ENCODE measurements at regions of chr16 and their contacts with region 1.

Region 1: DNA sequence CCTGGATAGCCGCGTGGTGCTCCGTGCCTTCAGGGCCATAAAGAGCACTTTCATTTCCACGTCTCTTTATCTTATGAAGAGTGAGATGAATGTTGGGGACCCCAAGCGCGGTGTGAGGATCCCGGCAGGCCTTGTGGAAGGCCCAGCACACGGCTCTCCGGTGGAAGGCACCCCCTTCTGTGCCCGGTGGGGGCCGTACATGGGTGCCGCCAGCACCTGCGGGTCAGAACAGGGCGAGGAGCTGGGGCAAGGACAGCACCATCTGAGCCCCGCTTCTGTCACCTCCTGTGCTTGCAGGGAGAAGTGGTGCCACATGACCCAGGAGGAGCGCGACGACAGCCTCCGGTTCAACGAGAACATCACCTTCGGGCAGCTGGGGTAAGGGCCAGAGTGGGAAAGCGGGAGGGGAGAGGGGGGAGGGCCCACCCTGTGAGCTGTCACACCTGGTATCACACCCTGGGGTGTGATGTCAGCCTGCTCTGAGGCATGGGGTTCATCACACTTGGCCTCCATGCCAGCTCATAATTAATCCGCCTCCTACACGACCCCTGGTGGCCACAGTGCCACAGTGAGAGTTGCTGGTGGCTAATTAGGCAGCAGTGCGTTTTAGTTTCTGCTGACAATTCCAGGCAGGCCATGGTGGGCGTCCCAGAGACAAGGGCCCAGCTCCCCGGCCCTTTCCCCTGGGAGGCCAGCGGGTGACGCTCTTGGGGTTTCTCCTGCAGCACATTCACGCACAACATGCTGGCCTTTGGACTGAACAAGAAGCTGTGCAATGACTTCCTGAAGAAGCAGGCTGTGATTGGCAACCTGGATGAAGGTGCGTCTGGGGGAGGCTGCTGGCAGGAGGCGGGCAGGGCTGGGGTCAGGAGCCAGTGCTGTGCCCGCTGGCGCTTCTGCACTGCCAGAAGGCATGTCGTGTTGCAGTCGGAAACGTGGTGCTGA is 25.7 kb downstream of the CIBAR2 start:
- DNase-seq: peak; percentile 82
- H3K4me3 Mint-ChIP-seq: no peak overlapping the region
- H3K27ac Mint-ChIP-seq: no peak overlapping the region
- H3K4me1 Mint-ChIP-seq: peaks cover 9% of the 10 kb centered on the region
- H3K27me3 Mint-ChIP-seq: no peaks in the 10 kb centered on the region
- CTCF ChIP-seq: peak; percentile 89

Region 2: DNA sequence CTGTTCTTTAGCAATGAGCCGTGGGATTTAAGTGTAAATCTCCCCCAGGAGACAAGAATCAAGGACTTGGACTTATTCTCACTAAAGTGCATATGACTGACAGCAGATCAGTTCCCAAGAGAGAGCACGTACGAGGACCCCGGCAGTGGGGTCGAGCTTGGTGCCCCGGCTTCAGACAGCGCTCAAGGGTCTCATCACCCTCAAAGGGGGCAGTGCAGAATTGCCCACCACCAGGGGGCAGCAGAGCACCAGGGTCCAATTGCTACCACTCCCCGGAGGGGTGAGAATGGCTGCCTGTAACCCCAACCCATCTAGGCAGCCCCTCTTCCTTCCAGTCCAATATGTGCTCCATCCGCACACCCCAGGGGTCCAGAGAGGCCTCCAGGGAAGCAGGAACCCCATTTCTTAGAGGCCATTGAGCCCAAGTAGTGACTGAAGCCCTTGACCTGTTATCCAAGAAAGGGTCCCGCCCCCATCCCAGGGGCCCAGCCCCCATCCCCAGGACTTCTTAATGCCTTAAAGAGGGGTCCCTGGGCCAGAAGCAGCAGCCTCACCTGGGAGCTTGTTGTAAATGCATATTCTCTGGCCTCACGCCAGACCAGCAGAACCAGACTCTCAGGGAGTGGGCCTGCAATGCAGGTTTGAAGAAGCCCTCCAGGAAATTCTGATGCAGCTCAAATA is 161.4 kb before region 1 on chr16:
- CTCF ChIA-PET with region 1: interaction called, 7 read pairs
- intact Hi-C with region 1: loop called (anchors 1 kb)
- DNase-seq: peak; percentile 84
- H3K4me3 Mint-ChIP-seq: no peak overlapping the region
- H3K27ac Mint-ChIP-seq: no peak overlapping the region
- H3K4me1 Mint-ChIP-seq: no peaks in the 10 kb centered on the region
- H3K27me3 Mint-ChIP-seq: peaks cover 34% of the 10 kb centered on the region
- CTCF ChIP-seq: peak; percentile 98

Region 3: DNA sequence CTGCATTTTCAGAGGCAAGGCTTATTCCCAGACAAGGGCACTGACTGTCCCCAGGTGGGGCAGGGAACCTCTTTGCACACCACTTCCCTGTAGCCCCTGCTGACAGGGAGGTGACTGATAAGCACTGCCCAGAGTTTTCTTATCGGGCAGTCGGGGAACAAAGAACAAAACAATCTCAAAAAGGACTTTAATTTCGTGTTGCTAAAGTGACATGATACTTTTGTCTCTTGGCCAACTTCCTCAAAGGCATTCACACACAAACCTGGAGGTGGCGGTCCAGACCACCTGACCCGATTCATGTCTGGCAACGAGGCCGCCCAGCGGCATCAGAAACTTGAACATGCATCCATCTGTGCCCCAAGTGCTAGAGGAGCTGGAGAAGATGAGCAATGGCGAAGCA is 104.2 kb before region 1 on chr16:
- CTCF ChIA-PET with region 1: interaction called, 12 read pairs
- intact Hi-C with region 1: loop called (anchors 1 kb)
- DNase-seq: peak; percentile 61
- H3K4me3 Mint-ChIP-seq: peak overlapping the region; percentile 29
- H3K27ac Mint-ChIP-seq: peak overlapping the region; percentile 85
- H3K4me1 Mint-ChIP-seq: peaks cover 70% of the 10 kb centered on the region
- H3K27me3 Mint-ChIP-seq: no peaks in the 10 kb centered on the region
- CTCF ChIP-seq: no peak

Region 4: GRCh38 chr16:84992717-84993075 is 93.9 kb before region 1 on chr16:
- CTCF ChIA-PET with region 1: interaction called, 12 read pairs
- intact Hi-C with region 1: no loop called
- DNase-seq: no peak
- H3K4me3 Mint-ChIP-seq: peak overlapping the region; percentile 37
- H3K27ac Mint-ChIP-seq: peak overlapping the region; percentile 95
- H3K4me1 Mint-ChIP-seq: peaks cover 54% of the 10 kb centered on the region
- H3K27me3 Mint-ChIP-seq: no peaks in the 10 kb centered on the region
- CTCF ChIP-seq: no peak

Region 5: DNA sequence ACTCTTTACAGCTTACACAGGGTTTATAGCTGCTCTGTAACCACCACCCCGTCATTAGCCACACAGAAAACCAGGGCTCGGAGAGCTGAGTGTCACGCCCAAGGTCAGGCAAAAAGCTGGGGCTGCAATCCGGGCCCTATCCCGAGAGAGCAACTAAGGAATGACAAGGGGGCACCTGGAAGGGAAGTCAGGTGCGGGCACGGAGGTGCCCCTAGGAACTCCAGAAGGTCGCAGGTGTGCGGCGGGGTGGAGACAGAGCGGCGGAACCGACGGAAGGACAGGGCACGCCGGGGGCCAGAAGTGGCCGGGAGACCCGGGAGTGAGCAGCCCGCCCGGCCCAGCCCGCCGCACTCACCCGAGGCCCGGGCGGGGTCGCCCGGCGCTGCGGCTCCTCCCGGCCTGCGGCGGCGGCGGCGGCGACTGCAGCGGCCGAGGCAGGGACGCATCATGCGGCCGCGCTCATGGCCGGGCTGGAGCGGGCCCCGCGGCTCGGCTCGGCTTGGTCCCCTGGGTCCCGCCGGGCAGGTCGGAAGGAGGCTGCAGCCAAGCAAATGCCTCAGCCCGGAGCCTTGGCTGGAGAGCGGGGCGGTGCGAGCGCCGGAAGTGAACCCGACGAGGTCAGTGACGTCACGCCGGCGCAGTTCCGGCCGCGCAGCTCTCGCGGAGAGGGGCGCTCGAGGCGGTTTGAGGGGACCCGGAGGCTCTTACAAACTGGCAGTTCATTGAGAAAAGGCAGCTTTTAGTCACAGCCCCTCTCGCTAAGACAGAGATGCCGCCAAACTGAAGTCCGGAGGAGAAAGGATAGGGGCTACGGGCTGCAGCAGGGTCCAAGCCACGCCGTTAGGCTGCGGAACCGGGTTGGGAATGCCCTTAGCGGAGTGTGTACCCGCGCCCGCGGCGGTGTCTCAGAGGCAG is 75.4 kb before region 1 on chr16 and contains the start of gene ZDHHC7:
- CTCF ChIA-PET with region 1: interaction called, 3 read pairs
- intact Hi-C with region 1: loop called (anchors 5 kb)
- DNase-seq: peak; percentile 92
- H3K4me3 Mint-ChIP-seq: peak within 1 kb of the TSS; percentile 89
- H3K27ac Mint-ChIP-seq: peak within 1 kb of the TSS; percentile 89
- H3K4me1 Mint-ChIP-seq: peaks cover 36% of the 10 kb centered on the region
- H3K27me3 Mint-ChIP-seq: no peaks in the 10 kb centered on the region
- CTCF ChIP-seq: no peak
- total RNA-seq, gene ZDHHC7: 100 and 109 TPM in 2 replicates

Region 6: DNA sequence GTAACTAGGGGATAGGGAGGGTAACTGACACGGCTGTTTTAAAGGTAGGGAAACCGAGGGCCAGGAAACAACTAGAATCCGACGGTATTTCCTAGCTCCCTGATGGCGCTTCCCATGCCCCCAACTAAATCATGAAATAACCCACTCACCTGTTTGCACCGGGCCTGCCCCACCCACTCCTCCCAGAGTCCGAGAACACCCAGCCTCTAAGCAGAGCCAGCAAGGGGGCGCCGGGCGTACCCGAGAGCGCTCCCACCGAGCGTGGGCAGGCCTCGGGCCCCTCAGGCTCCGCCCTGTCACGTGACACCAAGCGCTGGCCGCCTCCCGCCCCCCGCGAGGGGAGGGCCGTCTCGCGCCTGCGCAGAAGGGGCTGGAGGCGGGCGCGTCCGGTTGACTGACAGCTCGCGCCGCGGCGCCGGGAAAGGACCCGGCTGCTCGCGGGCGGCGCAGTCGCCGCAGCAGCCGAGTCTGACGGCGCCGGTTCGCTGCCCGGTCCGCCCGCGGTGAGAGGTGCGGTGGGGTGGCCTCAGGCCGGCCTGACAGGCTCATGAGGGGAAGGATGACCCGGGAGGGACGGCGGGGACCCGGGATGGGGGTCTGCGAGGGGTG is 59.2 kb before region 1 on chr16 and contains the start of gene KIAA0513:
- CTCF ChIA-PET with region 1: interaction called, 10 read pairs
- intact Hi-C with region 1: no loop called
- DNase-seq: peak; percentile 98
- H3K4me3 Mint-ChIP-seq: peak within 1 kb of the TSS; percentile 85
- H3K27ac Mint-ChIP-seq: peak within 1 kb of the TSS; percentile 77
- H3K4me1 Mint-ChIP-seq: peaks cover 33% of the 10 kb centered on the region
- H3K27me3 Mint-ChIP-seq: no peaks in the 10 kb centered on the region
- CTCF ChIP-seq: no peak
- total RNA-seq, gene KIAA0513: 12.4 and 15.1 TPM in 2 replicates